Transverse colon (tissue), 4 donors: ENCODE measurements at regions of chr2 and their contacts with region 1.

Region 1: DNA sequence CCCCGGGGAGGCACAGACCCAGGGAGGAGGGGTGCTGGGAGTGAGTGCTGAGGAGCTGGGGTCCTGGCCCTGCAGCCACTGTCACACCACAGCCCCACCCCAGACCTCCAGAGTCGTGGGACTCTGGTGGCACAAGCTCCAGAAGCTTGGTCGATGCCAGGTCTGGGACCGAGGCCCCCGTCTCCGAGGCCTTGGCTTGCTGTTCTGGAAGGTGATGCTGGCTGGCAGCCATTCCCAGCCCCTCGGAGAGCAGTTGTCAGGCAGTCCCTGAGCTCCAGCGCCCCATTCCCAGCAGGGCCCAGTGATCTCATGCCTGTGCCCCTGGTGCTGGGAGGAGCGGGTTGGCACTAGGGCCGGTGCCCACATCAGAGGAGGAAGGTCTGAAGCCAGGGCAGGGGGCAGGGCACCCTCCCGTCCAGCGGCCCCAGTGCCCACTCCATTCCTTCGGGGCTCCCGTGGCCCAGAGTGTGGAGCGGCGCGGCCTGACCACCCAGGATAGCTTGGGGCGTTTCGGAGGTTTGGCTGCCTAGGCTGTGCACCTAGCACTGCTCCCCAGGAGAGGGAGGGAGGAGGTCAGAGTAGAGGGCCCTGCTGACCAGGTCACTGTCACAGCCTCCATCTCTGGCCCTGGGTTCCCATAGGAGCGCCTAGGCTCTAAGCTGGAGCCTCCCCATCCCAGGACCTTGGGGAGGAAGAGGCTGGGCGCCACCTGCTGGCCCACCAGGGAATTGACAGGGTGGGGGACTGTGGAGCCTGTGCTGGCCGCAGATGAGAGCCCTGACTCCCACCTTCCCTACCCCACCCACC is 16.8 kb upstream of the ALPI start:
- DNase-seq: peak; percentile 45
- H3K4me3 ChIP-seq: no peak overlapping the region
- H3K27ac ChIP-seq: no peak overlapping the region
- H3K4me1 ChIP-seq: no peaks in the 10 kb centered on the region
- H3K27me3 ChIP-seq: peaks cover 5% of the 10 kb centered on the region
- CTCF ChIP-seq: peak; percentile 49 to 72 (median 51)
- EP300 ChIP-seq: no peak
- POLR2A ChIP-seq: no peak

Region 2: GRCh38 chr2:231099918-231100317 is 1339.2 kb before region 1 on chr2:
- in situ Hi-C with region 1: no loop called
- intact Hi-C with region 1: no loop called
- DNase-seq: no peak
- H3K4me3 ChIP-seq: no peak overlapping the region
- H3K27ac ChIP-seq: peak overlapping the region in 3 of 4 donors; percentile 14 to 64 (median 33)
- H3K4me1 ChIP-seq: peaks cover 3 to 53% (median 21%) of the 10 kb centered on the region in 4 donors
- H3K27me3 ChIP-seq: no peaks in the 10 kb centered on the region
- CTCF ChIP-seq: peak in 1 of 5 experiments; percentile 22
- EP300 ChIP-seq: no peak
- POLR2A ChIP-seq: no peak

Region 3: GRCh38 chr2:232042911-232043564 is 396.1 kb before region 1 on chr2:
- in situ Hi-C with region 1: no loop called
- intact Hi-C with region 1: no loop called
- DNase-seq: no peak
- H3K4me3 ChIP-seq: no peak overlapping the region
- H3K27ac ChIP-seq: no peak overlapping the region
- H3K4me1 ChIP-seq: peaks cover 0 to 8% (median 4%) of the 10 kb centered on the region in 4 donors
- H3K27me3 ChIP-seq: no peaks in the 10 kb centered on the region
- CTCF ChIP-seq: no peak
- EP300 ChIP-seq: no peak
- POLR2A ChIP-seq: no peak

Region 4: GRCh38 chr2:232339121-232340081 is 99.8 kb before region 1 on chr2:
- in situ Hi-C with region 1: loop called in 1 of 4 experiments (anchors 10 kb)
- intact Hi-C with region 1: no loop called
- DNase-seq: no peak
- H3K4me3 ChIP-seq: no peak overlapping the region
- H3K27ac ChIP-seq: no peak overlapping the region
- H3K4me1 ChIP-seq: no peaks in the 10 kb centered on the region
- H3K27me3 ChIP-seq: no peaks in the 10 kb centered on the region
- CTCF ChIP-seq: no peak
- EP300 ChIP-seq: no peak
- POLR2A ChIP-seq: no peak